Posterior cingulate gyrus (tissue), 11 donors: ENCODE measurements at regions of chr3 and their contacts with region 1.

Region 1: DNA sequence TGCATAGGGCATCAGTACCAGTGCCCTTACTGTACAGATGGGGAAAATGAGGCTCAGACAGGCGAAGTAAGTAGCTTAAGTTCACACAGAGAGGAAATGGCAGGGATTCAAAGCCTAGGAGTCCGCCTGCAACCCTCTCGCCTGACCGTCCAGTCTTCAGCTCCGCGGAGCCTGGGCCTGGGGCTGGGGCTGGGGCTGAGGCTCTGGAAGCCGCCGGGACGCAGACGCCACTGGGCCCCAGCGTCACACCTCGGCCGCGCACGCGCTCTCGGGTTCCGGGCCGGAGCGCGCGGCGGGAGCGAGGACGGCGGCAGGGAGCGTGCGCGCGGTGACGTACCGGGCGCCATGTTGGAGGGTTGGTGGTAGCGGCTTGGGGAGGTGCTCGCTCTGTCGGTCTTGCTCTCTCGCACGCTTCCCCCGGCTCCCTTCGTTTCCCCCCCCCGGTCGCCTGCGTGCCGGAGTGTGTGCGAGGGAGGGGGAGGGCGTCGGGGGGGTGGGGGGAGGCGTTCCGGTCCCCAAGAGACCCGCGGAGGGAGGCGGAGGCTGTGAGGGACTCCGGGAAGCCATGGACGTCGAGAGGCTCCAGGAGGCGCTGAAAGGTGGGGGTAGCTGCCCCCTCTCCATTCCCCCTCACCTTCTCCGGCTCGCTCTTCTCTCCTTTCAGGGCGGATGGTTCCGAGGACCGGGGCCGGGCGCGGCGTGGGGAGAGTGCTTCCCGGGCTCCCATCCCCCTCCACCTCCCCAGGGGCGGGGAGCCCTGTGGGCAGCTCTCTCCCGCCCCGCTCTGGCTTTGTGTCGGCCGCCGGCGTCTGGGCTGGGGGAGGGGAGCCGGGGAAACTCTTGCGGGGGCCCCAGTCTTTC is at the start of gene PPP4R2:
- DNase-seq: peak; percentile 76 to 97 (median 82)

Region 2: DNA sequence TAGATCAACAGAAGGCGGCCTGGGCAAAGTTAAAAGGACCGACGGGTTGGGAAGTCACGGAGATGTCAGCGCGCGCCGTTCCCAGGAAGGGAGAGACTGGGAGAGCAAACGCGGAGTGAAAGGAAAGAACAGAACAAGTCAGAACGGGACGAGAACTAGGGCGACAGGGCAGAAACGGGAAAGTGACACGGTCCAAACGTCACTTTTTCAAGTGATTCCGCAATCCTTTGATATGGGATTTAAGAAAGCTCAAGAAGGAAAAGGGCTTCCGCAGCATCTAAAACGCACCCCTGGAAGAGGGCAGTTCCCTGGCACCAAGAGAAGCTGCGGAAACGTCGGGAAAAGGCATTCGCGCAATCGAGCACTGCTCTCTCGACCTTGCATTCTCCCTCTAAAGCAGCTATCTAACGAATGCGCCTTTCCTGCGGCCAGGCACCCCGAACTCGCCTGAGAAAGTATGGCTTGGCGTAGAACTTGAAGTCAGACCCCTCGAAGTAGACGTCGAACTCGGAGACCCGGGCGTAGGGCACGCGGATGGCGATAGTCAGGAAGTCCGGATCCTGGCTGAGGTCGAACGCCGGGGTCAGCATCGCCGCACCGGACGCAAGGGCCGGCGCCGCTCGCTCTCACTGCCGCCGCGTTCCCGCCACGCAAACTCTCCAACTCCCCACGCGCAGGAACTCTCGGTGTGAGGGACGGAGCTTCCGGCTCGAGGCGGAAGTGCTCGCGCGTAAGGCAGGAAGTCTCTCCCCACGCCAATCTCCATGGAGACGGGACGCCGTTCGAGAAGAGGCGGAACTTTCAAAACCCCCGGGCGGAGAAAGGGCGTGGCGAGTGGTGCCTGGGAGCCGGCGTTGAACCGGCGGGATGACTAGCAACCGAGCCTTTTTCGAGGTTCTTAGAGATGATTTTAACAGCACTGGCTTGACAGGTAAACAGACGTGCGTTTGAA is 148.7 kb before region 1 on chr3 and contains the start of gene SHQ1:
- intact Hi-C with region 1: loop called (anchors 5 kb)
- DNase-seq: peak; percentile 86 to 99 (median 94)

Region 3: GRCh38 chr3:72887705-72888545 is 108.8 kb before region 1 on chr3 and contains the start of gene GXYLT2:
- intact Hi-C with region 1: loop called (anchors 5 kb)
- DNase-seq: peak; percentile 61 to 97 (median 78)

Region 4: DNA sequence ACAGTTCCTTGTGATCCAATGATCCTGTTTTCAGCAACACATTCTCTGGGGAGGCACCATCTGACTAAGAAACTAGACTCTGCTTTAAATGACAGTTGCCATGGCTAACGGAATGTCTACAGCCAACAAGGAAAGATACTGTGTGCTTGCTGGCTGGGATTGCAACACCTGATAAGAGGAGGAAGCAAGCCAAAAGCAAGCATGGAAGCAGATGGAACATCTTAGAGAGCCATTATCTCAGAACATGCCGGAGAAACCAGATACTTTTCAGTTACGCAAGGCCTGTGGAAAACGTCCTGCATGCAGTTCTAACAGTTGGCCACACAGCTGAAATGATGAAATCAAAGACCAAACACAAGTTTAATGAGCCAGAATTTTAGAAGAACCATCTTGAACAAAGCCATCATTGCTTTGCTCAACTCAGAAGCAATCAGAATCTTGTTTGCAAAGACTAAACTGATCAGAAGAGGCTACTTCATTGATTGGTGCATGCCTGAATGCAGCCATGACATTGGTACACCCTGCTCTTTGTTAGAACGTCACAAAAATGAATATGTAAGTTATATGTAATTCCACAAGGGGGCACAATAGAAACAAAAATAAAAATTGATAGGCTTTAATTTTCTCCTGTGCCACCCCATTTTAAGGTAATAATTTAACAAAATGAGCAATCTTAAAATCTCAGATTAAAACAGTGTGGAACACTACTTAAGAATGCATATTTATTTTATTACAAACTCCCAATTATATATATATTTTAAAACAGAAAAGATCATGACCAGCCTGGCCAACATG is 58.0 kb before region 1 on chr3:
- intact Hi-C with region 1: loop called (anchors 2 kb)
- DNase-seq: peak in 1 of 10 donors; percentile 7

Region 5: DNA sequence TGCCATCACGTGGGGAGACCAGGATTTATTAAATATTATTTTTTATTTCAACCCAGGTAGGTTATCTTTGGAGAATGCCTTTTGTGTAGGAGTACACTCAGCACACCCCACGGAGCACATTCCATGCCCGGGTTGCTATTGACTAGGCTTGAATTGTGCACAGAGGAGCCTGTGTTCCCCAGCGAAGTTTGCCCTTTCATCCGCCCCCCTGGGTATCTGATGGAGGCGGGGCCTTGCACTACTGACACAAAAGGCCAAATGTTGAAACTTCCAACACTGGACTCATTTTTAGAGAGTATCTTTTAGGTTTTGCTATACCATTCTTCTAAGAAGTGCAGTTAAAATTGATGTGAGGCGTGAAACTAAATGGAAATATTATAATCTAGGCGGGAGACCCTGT is 39.4 kb before region 1 on chr3:
- intact Hi-C with region 1: loop called (anchors 5 kb)
- DNase-seq: peak; percentile 47 to 97 (median 74)

Region 6: GRCh38 chr3:73056014-73056844 is 59.5 kb after region 1 on chr3:
- intact Hi-C with region 1: loop called (anchors 5 kb)
- DNase-seq: no peak

Region 7: GRCh38 chr3:73401616-73402290 is 405.1 kb after region 1 on chr3:
- intact Hi-C with region 1: no loop called
- DNase-seq: no peak